ENCODE measurements at regions of chr9 and their contacts with region 1.

Region 1: DNA sequence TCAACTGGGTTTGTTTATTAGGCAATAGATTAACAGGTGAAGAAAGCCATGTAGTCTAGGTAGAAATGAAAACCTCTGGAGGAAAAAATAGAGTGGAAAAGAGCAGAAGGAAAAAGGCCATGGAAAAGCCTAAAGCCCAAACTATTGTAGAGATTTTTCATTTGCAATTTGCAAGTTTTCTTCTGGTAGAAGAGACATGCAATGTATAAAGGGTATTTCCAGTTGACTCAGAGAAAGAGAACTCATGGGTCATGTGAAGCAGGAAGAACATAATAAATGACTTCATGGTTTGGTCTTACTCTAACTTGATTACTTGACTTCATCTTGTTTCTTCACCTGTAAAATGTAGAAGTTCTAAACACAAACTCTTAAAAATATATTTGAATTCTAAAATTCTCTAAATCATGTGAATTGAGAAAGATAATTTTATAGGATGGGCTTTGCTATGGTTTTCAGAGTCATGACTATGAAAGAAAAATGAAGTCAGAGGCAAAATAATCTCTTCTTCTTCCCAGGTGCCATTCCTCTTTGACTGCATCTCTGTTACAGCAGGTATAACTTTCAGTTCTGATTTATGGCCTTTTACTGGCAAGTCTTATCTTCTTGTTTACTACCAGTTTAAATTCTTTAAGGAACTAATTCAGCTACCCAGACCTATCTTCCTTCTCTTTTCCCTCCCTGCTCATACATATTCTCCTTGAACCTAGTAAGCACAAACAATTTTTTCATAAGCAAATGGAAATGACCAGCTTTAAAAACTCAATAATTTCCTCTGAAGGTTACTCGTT is 47.7 kb upstream of the TMC1 start:
- DNase-seq: no peak
- H3K4me3 ChIP-seq: no peak overlapping the region
- H3K27ac ChIP-seq: peak overlapping the region in 3 of 4 donors; percentile 42 to 60 (median 59)
- H3K4me1 ChIP-seq: peaks cover 0 to 43% (median 24%) of the 10 kb centered on the region in 4 donors
- H3K27me3 ChIP-seq: no peaks in the 10 kb centered on the region
- CTCF ChIP-seq: no peak
- EP300 ChIP-seq: no peak
- POLR2A ChIP-seq: no peak

Region 2: DNA sequence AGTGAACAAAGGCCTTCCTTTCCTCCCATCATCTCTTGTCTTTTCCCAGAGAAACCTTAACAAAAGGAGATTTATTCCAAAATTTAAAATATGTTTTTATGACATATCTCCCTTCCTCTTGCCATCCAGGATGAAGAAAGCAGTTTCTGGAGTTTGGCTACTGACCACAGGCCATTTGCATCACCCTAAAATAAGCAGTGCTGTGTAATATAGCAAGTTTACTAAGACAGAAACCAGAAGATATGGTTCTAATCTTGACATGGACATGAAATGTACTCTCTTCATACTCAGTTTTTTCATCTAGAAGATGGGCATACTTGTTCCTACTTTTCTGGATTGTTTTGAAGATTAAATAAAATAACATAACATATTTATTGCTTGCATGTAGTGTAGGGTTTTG is 58.5 kb before region 1 on chr9:
- in situ Hi-C with region 1: loop called in 1 of 4 experiments (anchors 10 kb)
- intact Hi-C with region 1: no loop called
- DNase-seq: no peak
- H3K4me3 ChIP-seq: no peak overlapping the region
- H3K27ac ChIP-seq: no peak overlapping the region
- H3K4me1 ChIP-seq: no peaks in the 10 kb centered on the region
- H3K27me3 ChIP-seq: no peaks in the 10 kb centered on the region
- CTCF ChIP-seq: no peak
- EP300 ChIP-seq: no peak
- POLR2A ChIP-seq: no peak

Region 3: GRCh38 chr9:72557549-72557948 is 83.9 kb after region 1 on chr9:
- in situ Hi-C with region 1: loop called in 1 of 4 experiments (anchors 25 kb)
- intact Hi-C with region 1: no loop called
- DNase-seq: peak; percentile 23
- H3K4me3 ChIP-seq: no peak overlapping the region
- H3K27ac ChIP-seq: no peak overlapping the region
- H3K4me1 ChIP-seq: peaks cover 10 to 16% (median 12%) of the 10 kb centered on the region in 4 donors
- H3K27me3 ChIP-seq: no peaks in the 10 kb centered on the region
- CTCF ChIP-seq: no peak
- EP300 ChIP-seq: no peak
- POLR2A ChIP-seq: no peak

Region 4: DNA sequence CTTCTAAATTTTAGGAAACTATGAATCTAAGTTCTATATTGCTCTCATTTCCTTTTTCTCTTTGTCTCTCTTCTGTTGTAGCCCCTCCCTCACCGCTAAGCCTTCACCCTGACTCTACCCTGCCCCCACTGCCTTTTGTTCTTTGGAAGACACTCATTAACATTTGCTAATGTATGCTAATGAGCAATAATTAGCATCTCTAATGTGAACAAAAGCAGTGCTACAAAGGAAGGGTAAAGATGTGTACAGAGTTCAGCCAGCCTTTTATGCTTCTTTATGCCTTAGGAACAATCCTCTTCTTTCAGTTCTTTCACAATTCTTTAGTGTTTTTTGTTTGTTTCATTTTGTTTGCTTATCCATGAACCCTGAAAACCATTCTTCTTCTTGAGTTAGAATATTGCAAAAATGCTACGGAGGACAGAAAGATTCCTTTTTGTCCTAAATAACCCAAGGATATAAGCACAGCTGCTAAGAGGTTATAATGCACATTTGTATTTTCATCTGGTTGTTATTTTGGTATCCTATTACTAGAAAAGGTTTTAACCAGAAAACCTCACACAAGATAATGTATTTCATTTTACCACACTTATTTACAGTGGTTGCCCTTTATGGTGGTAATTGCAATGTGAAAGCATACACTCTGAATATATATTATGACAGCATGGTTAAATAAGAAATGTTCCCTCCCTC is 207.1 kb after region 1 on chr9:
- in situ Hi-C with region 1: no loop called
- intact Hi-C with region 1: no loop called
- DNase-seq: no peak
- H3K4me3 ChIP-seq: no peak overlapping the region
- H3K27ac ChIP-seq: no peak overlapping the region
- H3K4me1 ChIP-seq: no peaks in the 10 kb centered on the region
- H3K27me3 ChIP-seq: no peaks in the 10 kb centered on the region
- CTCF ChIP-seq: no peak
- EP300 ChIP-seq: no peak
- POLR2A ChIP-seq: no peak